ENCODE measurements at regions of chr19 and their contacts with region 1.

Region 1: GRCh38 chr19:2578901-2579677 is 103.2 kb downstream of the GADD45B start:
- DNase-seq: peak; percentile 88 to 89
- H3K4me3 ChIP-seq: peak overlapping the region; percentile 40
- H3K4me3 Mint-ChIP-seq: peak overlapping the region; percentile 70
- H3K27ac Mint-ChIP-seq: peak overlapping the region; percentile 42
- H3K4me1 ChIP-seq: peaks cover 29% of the 10 kb centered on the region
- H3K4me1 Mint-ChIP-seq: no peaks in the 10 kb centered on the region
- H3K27me3 ChIP-seq: no peaks in the 10 kb centered on the region
- H3K27me3 Mint-ChIP-seq: no peaks in the 10 kb centered on the region
- CTCF ChIP-seq: peak; percentile 89 to 94

Region 2: DNA sequence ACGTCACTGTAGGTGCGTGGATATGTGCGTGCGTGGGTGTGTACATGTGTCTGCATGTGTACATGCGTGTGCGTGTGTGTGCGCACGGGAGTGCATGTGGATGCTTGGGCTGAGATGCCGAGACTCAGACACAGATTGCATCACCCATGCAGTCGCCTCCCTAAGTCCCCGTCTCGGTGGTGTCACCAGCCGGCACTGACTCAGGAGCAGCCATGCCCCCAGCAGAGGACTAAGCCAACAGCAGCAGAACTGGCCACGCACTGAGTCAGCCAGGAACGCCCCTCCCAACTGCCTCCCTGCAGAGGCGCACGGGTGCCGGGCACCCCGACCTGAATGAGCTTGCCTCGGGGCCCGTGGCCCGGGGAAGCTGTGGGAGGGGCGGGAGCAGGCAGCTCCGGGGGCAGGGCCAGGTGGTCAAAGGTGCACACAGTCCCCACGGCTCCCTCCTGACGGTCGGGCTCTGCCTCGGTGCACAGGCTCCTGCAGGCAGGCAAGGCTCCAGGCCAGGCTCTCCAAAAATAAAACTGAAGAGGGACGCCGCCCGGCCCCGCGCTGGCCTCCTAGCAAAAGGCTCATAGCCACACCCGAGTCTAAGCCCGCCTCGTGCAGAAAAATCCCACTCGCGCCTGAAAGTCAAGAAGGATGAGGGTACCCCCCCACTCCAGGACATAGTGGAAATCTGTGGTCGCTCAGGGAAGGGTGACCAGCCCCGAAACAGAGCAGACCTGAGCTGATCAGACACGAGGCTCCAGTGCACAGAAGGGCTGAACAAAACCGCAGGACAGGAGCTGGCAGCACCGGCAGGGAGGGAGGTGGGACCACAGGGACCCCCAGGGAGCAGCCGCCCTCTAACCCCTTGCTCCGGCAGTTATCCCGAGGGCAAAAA is 54.0 kb before region 1 on chr19:
- CTCF ChIA-PET with region 1: interaction called, 3 read pairs
- POLR2A ChIA-PET with region 1: no interaction called
- intact Hi-C with region 1: loop called (anchors 1 kb)
- DNase-seq: peak; percentile 49 to 73
- H3K4me3 ChIP-seq: peak overlapping the region; percentile 9; the same call in 1 of the 2 replicates
- H3K4me3 Mint-ChIP-seq: peak overlapping the region; percentile 24
- H3K27ac Mint-ChIP-seq: peak overlapping the region; percentile 32
- H3K4me1 ChIP-seq: peaks cover 43% of the 10 kb centered on the region
- H3K4me1 Mint-ChIP-seq: peaks cover 6% of the 10 kb centered on the region
- H3K27me3 ChIP-seq: no peaks in the 10 kb centered on the region
- H3K27me3 Mint-ChIP-seq: no peaks in the 10 kb centered on the region
- CTCF ChIP-seq: no peak

Region 3: DNA sequence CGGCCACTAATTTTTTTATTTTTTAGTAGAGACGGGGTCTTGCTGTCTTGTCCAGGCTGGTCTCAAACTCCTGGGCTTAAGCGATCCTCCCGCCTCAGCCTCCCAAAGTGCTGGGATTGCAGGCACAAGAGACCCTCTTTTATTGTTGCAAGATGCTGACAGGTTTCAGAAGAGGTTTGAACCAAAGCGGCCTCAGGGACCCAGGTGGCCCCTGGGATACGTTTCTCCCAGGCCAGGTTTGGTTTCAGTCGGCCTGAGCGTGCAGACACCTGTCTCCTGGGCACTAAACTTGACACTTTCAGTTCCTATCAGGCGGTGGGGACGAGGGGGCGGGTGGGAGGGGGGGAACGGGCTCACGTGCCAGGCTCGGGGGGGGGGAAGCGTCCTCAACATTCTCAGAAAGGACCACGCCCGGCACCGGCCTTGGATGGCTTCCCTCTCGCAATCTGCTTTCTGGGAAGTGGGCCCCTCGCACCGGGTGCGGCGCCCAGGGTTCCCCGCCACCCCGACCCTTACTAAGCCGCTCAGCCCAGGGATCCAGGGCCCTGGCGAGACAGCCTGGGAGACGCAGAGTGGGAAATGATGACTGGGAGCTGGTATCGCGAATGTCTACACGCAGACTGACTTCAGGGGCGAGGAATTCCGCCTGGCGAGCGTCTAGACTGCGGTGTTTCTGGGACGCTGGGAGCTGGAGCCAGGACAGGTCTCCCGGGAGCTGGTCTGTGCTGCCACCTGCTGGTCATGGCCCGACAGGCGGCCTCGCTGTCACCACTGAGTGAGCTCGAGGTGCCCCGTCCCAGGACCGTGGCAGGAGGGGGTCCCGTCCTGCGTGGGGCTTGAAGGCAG is 31.8 kb after region 1 on chr19:
- CTCF ChIA-PET with region 1: interaction called, 19 read pairs
- POLR2A ChIA-PET with region 1: interaction called, 3 read pairs
- intact Hi-C with region 1: loop called (anchors 5 kb)
- DNase-seq: peak; percentile 87 to 94
- H3K4me3 ChIP-seq: peak overlapping the region; percentile 37
- H3K4me3 Mint-ChIP-seq: peak overlapping the region; percentile 76
- H3K27ac Mint-ChIP-seq: peak overlapping the region; percentile 64
- H3K4me1 ChIP-seq: no peaks in the 10 kb centered on the region
- H3K4me1 Mint-ChIP-seq: no peaks in the 10 kb centered on the region
- H3K27me3 ChIP-seq: no peaks in the 10 kb centered on the region
- H3K27me3 Mint-ChIP-seq: no peaks in the 10 kb centered on the region
- CTCF ChIP-seq: peak; percentile 93 to 95